BJ (cell line): ENCODE measurements at regions of chr5 and their contacts with region 1.

Region 1: DNA sequence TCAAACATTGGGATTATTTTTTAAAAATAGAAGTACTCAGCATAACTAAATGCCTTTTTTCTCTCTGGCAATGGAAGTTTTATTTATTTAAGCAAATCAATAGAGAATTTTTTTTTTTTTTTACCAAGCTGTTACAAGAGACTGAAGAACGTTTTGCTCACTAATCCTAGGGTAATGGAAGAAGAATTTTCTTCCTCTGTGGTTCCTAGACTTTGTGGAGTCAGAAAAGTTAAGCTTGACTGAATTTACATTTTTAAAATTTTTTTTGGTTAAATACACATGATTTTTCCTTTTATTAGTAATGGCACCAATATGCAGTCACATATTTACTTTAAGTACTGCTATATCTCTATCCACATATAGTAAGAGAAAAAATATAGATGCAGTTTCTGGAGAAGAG is 189.8 kb downstream of the PCSK1 start:
- DNase-seq: no peak
- H3K4me3 ChIP-seq: no peak overlapping the region
- H3K27me3 ChIP-seq: no peaks in the 10 kb centered on the region
- CTCF ChIP-seq: no peak

Region 2: GRCh38 chr5:95900383-95900958 is 342.7 kb before region 1 on chr5:
- CTCF ChIA-PET with region 1: no interaction called
- POLR2A ChIA-PET with region 1: no interaction called
- DNase-seq: peak; percentile 13
- H3K4me3 ChIP-seq: no peak overlapping the region
- H3K27me3 ChIP-seq: no peaks in the 10 kb centered on the region
- CTCF ChIP-seq: no peak

Region 3: GRCh38 chr5:96045888-96046287 is 197.3 kb before region 1 on chr5:
- CTCF ChIA-PET with region 1: no interaction called
- POLR2A ChIA-PET with region 1: no interaction called
- DNase-seq: no peak
- H3K4me3 ChIP-seq: no peak overlapping the region
- H3K27me3 ChIP-seq: no peaks in the 10 kb centered on the region
- CTCF ChIP-seq: no peak

Region 4: DNA sequence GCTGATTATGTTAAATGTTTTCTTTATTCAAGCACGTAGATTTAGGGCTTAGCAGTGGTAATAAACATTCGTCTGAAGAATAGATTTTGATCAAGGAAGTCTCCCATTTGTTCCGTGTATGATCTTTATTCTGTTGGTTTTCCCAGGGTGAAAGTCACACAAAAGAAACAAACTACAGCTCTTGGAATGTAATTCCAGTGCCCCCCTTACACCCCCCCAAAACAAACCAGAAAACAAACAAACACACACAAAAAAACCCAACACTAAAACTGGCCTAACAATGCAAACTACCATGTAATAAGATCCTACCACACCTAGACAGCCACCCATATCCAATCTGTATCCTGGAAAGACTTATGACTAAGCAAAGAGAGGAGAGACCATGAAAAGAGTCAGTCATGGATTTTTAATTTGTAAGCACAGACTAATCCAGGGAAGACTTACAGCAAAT is 85.3 kb before region 1 on chr5:
- CTCF ChIA-PET with region 1: no interaction called
- POLR2A ChIA-PET with region 1: no interaction called
- DNase-seq: no peak
- H3K4me3 ChIP-seq: no peak overlapping the region
- H3K27me3 ChIP-seq: no peaks in the 10 kb centered on the region
- CTCF ChIP-seq: no peak

Region 5: DNA sequence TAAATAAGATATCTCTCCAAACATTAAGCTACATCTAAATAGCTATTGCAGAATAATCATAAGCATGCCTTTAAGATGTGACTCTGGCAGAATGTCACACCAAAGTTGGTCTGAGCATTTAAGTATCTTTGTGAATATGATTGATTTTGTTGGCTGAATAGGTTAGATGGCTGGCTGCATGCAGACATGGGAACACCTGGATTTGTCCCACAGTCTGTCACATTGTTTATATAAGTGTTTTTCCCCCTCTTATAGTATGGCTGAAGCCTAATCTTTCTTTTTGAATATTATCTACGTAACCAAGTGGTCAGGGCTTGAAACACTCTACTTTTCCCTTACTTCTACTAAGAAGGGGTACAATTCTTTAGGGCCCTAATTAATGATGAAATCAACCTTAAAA is 153.7 kb after region 1 on chr5:
- CTCF ChIA-PET with region 1: no interaction called
- POLR2A ChIA-PET with region 1: interaction called, 10 read pairs
- DNase-seq: no peak
- H3K4me3 ChIP-seq: no peak overlapping the region
- H3K27me3 ChIP-seq: no peaks in the 10 kb centered on the region
- CTCF ChIP-seq: no peak